ENCODE measurements at regions of chr6 and their contacts with region 1.

Region 1: GRCh38 chr6:144284783-144285547 is at the start of gene UTRN:
- DNase-seq: peak; percentile 87 to 94 (median 94)
- ATAC-seq: peak; percentile 86 to 87
- H3K4me3 ChIP-seq: peak within 1 kb of the TSS; percentile 97
- H3K27ac ChIP-seq: peak within 1 kb of the TSS; percentile 99
- H3K4me1 ChIP-seq: no peaks in the 10 kb centered on the region
- H3K27me3 ChIP-seq: no peaks in the 10 kb centered on the region
- total RNA-seq, gene UTRN: 55.5 to 70.5 (median 68.5) TPM

Region 2: DNA sequence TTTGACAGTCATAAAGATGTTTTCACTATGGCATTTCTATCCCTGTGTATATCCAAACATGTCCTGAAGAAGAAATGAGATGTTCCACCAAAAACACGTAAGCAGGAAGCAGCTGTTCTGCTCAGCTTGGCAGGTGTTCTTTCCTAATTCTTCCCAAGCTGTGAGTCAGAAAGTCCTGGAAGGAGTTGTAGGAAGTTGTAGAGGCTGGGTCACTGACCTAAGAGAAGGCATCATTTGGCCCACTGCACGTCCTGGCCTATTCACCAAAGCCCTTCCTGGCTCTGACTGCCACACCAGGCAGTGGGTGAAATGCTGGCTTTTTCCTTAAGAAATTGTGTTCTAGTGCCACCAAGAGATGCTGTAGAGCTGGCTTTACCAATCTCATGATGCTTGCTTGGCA is 94.4 kb before region 1 on chr6:
- intact Hi-C with region 1: no loop called
- DNase-seq: peak in 1 of 3 donors; percentile 16
- ATAC-seq: peak; percentile 74 to 93
- H3K4me3 ChIP-seq: no peak overlapping the region
- H3K27ac ChIP-seq: no peak overlapping the region
- H3K4me1 ChIP-seq: no peaks in the 10 kb centered on the region
- H3K27me3 ChIP-seq: no peaks in the 10 kb centered on the region

Region 3: GRCh38 chr6:144349690-144350527 is 64.9 kb after region 1 on chr6:
- intact Hi-C with region 1: loop called in 1 of 4 experiments (anchors 10 kb)
- DNase-seq: peak in 1 of 3 donors; percentile 30
- ATAC-seq: peak; percentile 76 to 94
- H3K4me3 ChIP-seq: no peak overlapping the region
- H3K27ac ChIP-seq: peak overlapping the region; percentile 46
- H3K4me1 ChIP-seq: peaks cover 18% of the 10 kb centered on the region
- H3K27me3 ChIP-seq: no peaks in the 10 kb centered on the region

Region 4: DNA sequence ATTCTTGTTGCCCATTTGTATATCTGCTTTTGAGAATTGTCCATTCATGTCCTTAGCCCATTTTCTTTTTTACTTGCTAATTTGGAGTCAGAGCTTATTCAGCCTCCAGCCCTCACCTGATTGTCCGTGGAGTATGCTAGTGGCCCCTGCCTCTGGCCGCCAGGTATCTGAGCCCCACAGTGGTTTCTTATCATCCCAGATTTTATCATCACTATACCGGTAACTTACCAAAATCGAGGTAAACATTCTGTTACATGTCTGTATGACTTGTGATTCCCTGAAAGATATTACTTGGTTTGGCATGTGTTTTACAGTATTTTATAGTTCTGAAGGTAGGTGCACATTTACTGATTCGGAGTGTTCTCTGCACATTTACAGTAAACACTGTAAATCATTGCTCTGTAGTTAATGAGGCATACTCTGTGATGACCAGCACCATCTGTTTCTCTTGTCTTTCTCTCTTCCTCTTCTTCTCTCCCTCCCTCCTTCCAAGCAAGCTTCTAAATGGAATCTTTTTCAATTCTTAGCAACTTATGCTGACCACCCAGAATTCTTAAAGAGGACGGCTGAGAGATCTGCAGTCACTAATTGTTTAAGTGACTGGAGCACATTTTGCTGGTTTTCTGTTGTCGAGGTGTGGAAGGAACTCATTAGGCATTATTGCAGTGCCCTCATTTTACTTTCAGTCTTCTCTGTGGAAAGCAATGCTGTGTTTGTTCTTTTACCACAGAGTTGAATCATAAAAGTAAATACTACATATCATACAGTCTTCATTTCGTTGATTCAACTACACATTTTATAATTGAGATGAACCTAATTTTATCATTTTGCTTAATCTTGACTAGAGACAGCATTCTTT is 126.6 kb after region 1 on chr6:
- intact Hi-C with region 1: no loop called
- DNase-seq: no peak
- ATAC-seq: no peak
- H3K4me3 ChIP-seq: no peak overlapping the region
- H3K27ac ChIP-seq: no peak overlapping the region
- H3K4me1 ChIP-seq: peaks cover 8% of the 10 kb centered on the region
- H3K27me3 ChIP-seq: no peaks in the 10 kb centered on the region

Region 5: GRCh38 chr6:144482142-144482541 is 197.2 kb after region 1 on chr6:
- intact Hi-C with region 1: loop called in 1 of 4 experiments (anchors 10 kb)
- DNase-seq: peak; percentile 73 to 92 (median 81)
- ATAC-seq: peak in 1 of 2 donors; percentile 72
- H3K4me3 ChIP-seq: no peak overlapping the region
- H3K27ac ChIP-seq: no peak overlapping the region
- H3K4me1 ChIP-seq: peaks cover 4% of the 10 kb centered on the region
- H3K27me3 ChIP-seq: no peaks in the 10 kb centered on the region